Activated CD4-positive, alpha-beta memory T cell treated with anti-CD3 and anti-CD28 coated beads, Interleukin-2, amount 10 ng/mL, durations not matched to agents 7 days and 5 days (primary cell): ENCODE measurements at regions of chr16 and their contacts with region 1.

Region 1: GRCh38 chr16:11161974-11162373 is 94.0 kb downstream of the SOCS1 start:
- DNase-seq: no peak
- H3K4me3 Mint-ChIP-seq: no peak overlapping the region
- H3K27ac Mint-ChIP-seq: peak overlapping the region; percentile 70
- H3K4me1 Mint-ChIP-seq: peaks cover 88% of the 10 kb centered on the region
- H3K27me3 Mint-ChIP-seq: no peaks in the 10 kb centered on the region

Region 2: GRCh38 chr16:11175787-11176341 is 13.9 kb after region 1 on chr16:
- CTCF ChIA-PET with region 1: interaction called, 3 read pairs
- POLR2A ChIA-PET with region 1: interaction called, 12 read pairs
- DNase-seq: peak; percentile 59
- H3K4me3 Mint-ChIP-seq: no peak overlapping the region
- H3K27ac Mint-ChIP-seq: peak overlapping the region; percentile 84
- H3K4me1 Mint-ChIP-seq: peaks cover 86% of the 10 kb centered on the region
- H3K27me3 Mint-ChIP-seq: no peaks in the 10 kb centered on the region

Region 3: GRCh38 chr16:11232852-11233726 is 71.1 kb after region 1 on chr16:
- CTCF ChIA-PET with region 1: interaction called, 4 read pairs
- POLR2A ChIA-PET with region 1: interaction called, 10 read pairs
- DNase-seq: peak; percentile 95
- H3K4me3 Mint-ChIP-seq: peak overlapping the region; percentile 66
- H3K27ac Mint-ChIP-seq: peak overlapping the region; percentile 98
- H3K4me1 Mint-ChIP-seq: peaks cover 86% of the 10 kb centered on the region
- H3K27me3 Mint-ChIP-seq: no peaks in the 10 kb centered on the region